CD4-positive, alpha-beta T cell (primary cell): ENCODE measurements at regions of chr3 and their contacts with region 1.

Region 1: GRCh38 chr3:185912929-185913901 is 24.6 kb downstream of the TRA2B start:
- DNase-seq: no peak
- ATAC-seq: peak; percentile 21
- H3K4me3 ChIP-seq: no peak overlapping the region
- H3K4me3 Mint-ChIP-seq: peak overlapping the region; percentile 12
- H3K27ac ChIP-seq: no peak overlapping the region
- H3K27ac Mint-ChIP-seq: peak overlapping the region; percentile 75
- H3K4me1 ChIP-seq: no peaks in the 10 kb centered on the region
- H3K4me1 Mint-ChIP-seq: peaks cover 15% of the 10 kb centered on the region
- H3K27me3 ChIP-seq: no peaks in the 10 kb centered on the region
- H3K27me3 Mint-ChIP-seq: no peaks in the 10 kb centered on the region
- CTCF ChIP-seq: no peak

Region 2: DNA sequence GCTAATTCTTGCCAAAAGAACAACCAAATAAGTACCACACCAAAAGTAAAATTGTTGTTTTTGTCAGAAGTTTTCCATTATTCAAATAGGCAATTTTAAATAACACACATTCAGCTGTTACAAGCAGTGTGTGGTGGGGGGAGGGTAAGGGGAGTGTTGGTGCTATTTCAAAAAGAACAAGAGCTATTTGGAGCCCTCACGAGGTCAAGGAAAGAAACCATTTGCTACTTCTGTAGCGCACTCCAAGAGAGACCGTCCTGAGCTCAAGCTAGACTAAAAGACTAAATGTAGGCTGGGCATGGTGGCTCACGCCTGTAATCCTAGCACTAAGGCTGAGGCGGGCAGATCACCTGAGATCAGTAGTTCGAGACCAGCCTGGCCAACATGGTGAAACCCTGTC is 67.2 kb before region 1 on chr3:
- CTCF ChIA-PET with region 1: no interaction called
- POLR2A ChIA-PET with region 1: no interaction called
- intact Hi-C with region 1: no loop called
- DNase-seq: no peak
- ATAC-seq: no peak
- H3K4me3 ChIP-seq: no peak overlapping the region
- H3K4me3 Mint-ChIP-seq: no peak overlapping the region
- H3K27ac ChIP-seq: no peak overlapping the region
- H3K27ac Mint-ChIP-seq: no peak overlapping the region
- H3K4me1 ChIP-seq: no peaks in the 10 kb centered on the region
- H3K4me1 Mint-ChIP-seq: no peaks in the 10 kb centered on the region
- H3K27me3 ChIP-seq: peaks cover 0 to 7% of the 10 kb centered on the region in 2 experiments
- H3K27me3 Mint-ChIP-seq: peaks cover 8% of the 10 kb centered on the region
- CTCF ChIP-seq: no peak

Region 3: DNA sequence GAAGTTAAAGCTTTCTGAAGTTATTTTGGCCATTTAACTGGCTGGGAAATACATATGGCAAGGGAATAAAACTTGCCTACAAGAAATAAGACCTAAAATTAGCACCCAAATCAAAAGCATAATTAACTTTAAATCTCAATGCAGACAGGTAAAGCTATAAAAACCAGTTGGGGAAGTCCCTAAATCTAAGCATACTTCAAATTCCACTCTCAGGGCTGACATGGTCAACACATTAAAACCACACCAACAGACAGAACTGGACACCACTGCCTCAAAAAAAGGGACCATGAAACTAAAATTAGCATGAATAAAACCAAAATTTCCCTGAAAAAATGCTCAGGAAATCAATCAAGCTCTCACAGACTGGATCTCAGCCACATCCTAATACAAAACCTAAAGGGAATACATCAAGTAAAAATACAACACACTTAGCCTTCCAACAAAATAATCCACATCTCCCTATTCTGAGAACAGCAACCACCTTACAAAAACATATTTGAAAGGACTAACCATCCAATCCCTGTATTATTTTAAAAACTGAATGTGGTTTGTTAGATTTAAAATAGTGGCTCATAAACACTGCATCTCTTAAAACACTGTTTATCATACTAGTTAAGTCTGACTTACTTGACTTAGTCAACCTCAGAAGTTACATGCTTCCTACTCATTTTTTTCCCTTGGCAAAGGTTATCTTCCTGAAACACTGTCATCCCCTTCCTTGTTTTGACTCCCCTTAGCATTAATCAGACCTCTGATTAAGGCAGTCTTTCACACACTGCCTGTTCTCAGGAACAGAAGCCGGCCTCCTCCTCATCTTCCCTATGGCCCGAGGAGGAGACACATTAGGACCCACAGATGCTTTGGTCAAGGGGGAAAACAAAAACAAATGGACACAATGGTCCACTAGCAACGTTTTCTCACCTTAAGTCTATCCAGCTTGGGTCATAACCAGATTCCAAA is 16.3 kb after region 1 on chr3:
- CTCF ChIA-PET with region 1: interaction called, 3 read pairs
- POLR2A ChIA-PET with region 1: interaction called, 19 read pairs
- intact Hi-C with region 1: loop called (anchors 2 kb)
- DNase-seq: no peak
- ATAC-seq: no peak
- H3K4me3 ChIP-seq: peak overlapping the region; percentile 27
- H3K4me3 Mint-ChIP-seq: peak overlapping the region; percentile 97
- H3K27ac ChIP-seq: peak overlapping the region in 1 of 2 donors; percentile 24
- H3K27ac Mint-ChIP-seq: peak overlapping the region; percentile 56
- H3K4me1 ChIP-seq: peaks cover 37% of the 10 kb centered on the region
- H3K4me1 Mint-ChIP-seq: peaks cover 100% of the 10 kb centered on the region
- H3K27me3 ChIP-seq: no peaks in the 10 kb centered on the region
- H3K27me3 Mint-ChIP-seq: no peaks in the 10 kb centered on the region
- CTCF ChIP-seq: no peak

Region 4: DNA sequence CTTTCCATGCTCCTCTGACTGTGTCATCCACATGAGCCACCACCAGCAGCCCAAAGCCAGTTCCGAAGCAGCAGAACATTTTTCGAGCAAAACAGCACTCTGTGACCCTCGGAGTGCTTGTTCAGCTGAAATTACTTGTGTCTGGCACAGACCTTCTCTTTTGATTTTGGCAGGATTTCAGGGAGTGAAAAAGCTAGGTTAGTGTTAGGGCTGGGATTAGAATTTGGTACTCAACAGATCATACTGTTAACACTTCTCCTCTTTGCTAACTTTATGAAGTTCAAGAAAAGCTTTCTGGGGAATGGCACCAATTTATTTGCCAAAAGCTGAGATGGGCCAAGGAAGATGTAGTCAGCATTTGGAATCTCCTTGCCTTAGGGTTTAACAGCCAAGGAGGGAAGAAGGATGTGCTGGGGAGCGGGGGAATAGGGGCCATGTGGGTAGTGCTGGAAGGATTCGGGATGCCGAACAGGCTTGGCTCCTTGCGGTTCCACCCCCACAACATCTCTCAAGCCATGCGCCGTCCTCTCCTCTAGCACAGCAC is 79.7 kb after region 1 on chr3:
- CTCF ChIA-PET with region 1: no interaction called
- POLR2A ChIA-PET with region 1: no interaction called
- intact Hi-C with region 1: loop called in 1 of 2 experiments (anchors 2 kb)
- DNase-seq: no peak
- ATAC-seq: no peak
- H3K4me3 ChIP-seq: no peak overlapping the region
- H3K4me3 Mint-ChIP-seq: no peak overlapping the region
- H3K27ac ChIP-seq: no peak overlapping the region
- H3K27ac Mint-ChIP-seq: no peak overlapping the region
- H3K4me1 ChIP-seq: no peaks in the 10 kb centered on the region
- H3K4me1 Mint-ChIP-seq: no peaks in the 10 kb centered on the region
- H3K27me3 ChIP-seq: no peaks in the 10 kb centered on the region
- H3K27me3 Mint-ChIP-seq: no peaks in the 10 kb centered on the region
- CTCF ChIP-seq: no peak